ENCODE measurements at regions of chr12 and their contacts with region 1.

Region 1: GRCh38 chr12:21697904-21698630 is 40.4 kb upstream of the LDHB start:
- DNase-seq: peak in 1 of 3 donors; percentile 2
- H3K4me3 ChIP-seq: no peak overlapping the region
- H3K4me3 Mint-ChIP-seq: peak overlapping the region in 1 of 2 donors; percentile 61
- H3K27ac ChIP-seq: no peak overlapping the region
- H3K27ac Mint-ChIP-seq: no peak overlapping the region
- H3K4me1 ChIP-seq: peaks cover 0 to 3% of the 10 kb centered on the region in 2 donors
- H3K4me1 Mint-ChIP-seq: peaks cover 7% of the 10 kb centered on the region
- H3K27me3 ChIP-seq: no peaks in the 10 kb centered on the region
- H3K27me3 Mint-ChIP-seq: no peaks in the 10 kb centered on the region
- CTCF ChIP-seq: peak; percentile 65

Region 2: DNA sequence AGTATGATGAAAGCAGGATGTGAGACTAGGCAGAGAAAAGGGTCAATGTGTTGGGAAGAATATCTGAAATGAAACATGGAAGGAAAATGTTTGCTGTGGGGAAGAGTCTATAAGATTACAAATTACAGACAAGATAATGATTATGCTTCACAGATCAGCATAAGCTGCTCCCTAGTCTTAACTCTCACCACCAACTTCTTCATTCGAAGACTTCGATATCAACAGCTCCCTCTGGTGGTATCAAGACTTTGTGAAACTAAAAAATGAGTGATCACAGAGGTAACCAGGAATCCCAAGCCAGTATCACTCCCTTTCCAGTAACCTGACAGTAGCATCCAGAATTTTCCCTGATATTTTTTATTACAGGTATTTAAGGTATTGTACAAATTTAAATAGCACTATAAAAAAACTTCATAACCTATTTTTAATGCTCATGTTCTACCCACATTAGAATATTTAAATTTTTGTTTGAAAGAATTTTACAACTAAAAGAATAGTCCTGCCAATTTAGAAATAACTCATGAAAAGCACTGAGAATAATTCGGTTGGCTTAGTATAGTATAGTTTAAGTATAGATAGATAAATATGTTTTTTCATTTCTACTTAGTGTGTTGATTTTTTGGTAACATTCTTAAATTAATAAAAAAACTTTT is 761.9 kb after region 1 on chr12:
- intact Hi-C with region 1: loop called in 1 of 2 experiments (anchors 5 kb)
- DNase-seq: peak; percentile 16 to 53 (median 35)
- H3K4me3 ChIP-seq: no peak overlapping the region
- H3K4me3 Mint-ChIP-seq: no peak overlapping the region
- H3K27ac ChIP-seq: no peak overlapping the region
- H3K27ac Mint-ChIP-seq: peak overlapping the region in 1 of 7 donors; percentile 69
- H3K4me1 ChIP-seq: no peaks in the 10 kb centered on the region
- H3K4me1 Mint-ChIP-seq: peaks cover 5% of the 10 kb centered on the region
- H3K27me3 ChIP-seq: no peaks in the 10 kb centered on the region
- H3K27me3 Mint-ChIP-seq: no peaks in the 10 kb centered on the region
- CTCF ChIP-seq: peak; percentile 77